ENCODE measurements at regions of chr17 and their contacts with region 1.

Region 1: DNA sequence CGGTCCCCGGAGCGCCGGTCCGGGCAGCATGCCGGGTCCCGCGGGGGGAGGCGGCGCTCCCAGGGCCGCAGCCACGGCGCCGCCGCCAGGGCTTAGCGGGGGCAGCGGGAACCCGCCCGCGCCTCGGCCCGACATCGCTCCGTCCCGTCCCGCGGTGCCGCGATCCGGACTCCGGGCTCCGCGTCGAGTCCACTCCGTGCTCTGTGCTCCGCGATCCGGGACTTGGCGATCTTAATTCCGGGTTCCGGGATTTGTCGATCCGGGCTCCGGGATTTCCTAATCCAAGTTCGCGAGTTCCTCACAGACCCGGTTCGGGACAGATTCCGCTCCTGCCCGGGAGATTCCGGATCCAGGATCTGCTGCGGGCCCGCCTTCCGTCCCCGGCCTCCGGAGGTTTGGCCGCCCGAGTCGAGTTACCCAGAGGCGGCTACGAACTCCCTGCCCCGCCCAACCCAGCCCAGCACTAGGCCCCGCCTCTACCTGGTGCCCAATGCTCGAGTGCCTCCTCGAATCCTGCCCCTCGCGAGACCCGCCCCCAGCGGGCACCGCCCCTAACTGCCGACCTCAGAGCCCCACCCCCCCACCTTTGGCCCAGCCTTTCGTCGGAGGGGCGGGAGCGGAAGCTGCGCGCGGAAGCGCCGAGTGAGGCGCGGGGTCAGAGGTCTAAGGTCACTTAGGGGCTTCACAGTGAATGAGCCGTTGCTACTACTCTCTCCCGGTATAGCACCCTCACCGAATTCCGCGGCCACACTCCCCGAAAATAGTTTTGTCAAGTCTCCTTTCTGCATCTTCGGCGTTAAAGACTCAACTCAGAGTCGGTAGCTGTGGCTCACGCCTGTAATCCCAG is at the start of gene SMARCD2:
- DNase-seq: peak; percentile 99
- ATAC-seq: peak; percentile 67 to 68
- H3K4me3 ChIP-seq: peak within 1 kb of the TSS; percentile 77 to 96 (median 91)
- H3K27ac ChIP-seq: peak within 1 kb of the TSS; percentile 96 to 99 (median 96)
- H3K4me1 ChIP-seq: peaks cover 42 to 45% of the 10 kb centered on the region in 2 donors
- H3K27me3 ChIP-seq: no peaks in the 10 kb centered on the region
- CTCF ChIP-seq: peak in 3 of 5 experiments; percentile 23 to 54 (median 47)
- POLR2A ChIP-seq: peak; percentile 80 to 82
- total RNA-seq, gene SMARCD2: 30.2 to 64.3 (median 44.9) TPM

Region 2: GRCh38 chr17:62065598-62066468 is 1776.9 kb before region 1 on chr17:
- in situ Hi-C with region 1: no loop called
- intact Hi-C with region 1: loop called (anchors 10 kb)
- DNase-seq: peak; percentile 98 to 99
- ATAC-seq: peak; percentile 82 to 86
- H3K4me3 ChIP-seq: peak overlapping the region; percentile 84 to 100 (median 91)
- H3K27ac ChIP-seq: peak overlapping the region; percentile 96 to 100 (median 100)
- H3K4me1 ChIP-seq: peaks cover 24 to 26% of the 10 kb centered on the region in 2 donors
- H3K27me3 ChIP-seq: no peaks in the 10 kb centered on the region
- CTCF ChIP-seq: peak; percentile 85 to 95 (median 92)
- POLR2A ChIP-seq: peak; percentile 89 to 94

Region 3: GRCh38 chr17:63741221-63742049 is 101.3 kb before region 1 on chr17 and contains the start of gene STRADA:
- in situ Hi-C with region 1: no loop called
- intact Hi-C with region 1: loop called (anchors 2 kb)
- DNase-seq: peak; percentile 98 to 99
- ATAC-seq: peak; percentile 94 to 98
- H3K4me3 ChIP-seq: peak within 1 kb of the TSS; percentile 77 to 85 (median 82)
- H3K27ac ChIP-seq: peak within 1 kb of the TSS; percentile 86 to 92 (median 90)
- H3K4me1 ChIP-seq: peaks cover 14% of the 10 kb centered on the region in 2 donors
- H3K27me3 ChIP-seq: no peaks in the 10 kb centered on the region
- CTCF ChIP-seq: no peak
- POLR2A ChIP-seq: peak; percentile 58 to 72
- total RNA-seq, gene STRADA: 7.5 to 15.0 (median 8.6) TPM

Region 4: DNA sequence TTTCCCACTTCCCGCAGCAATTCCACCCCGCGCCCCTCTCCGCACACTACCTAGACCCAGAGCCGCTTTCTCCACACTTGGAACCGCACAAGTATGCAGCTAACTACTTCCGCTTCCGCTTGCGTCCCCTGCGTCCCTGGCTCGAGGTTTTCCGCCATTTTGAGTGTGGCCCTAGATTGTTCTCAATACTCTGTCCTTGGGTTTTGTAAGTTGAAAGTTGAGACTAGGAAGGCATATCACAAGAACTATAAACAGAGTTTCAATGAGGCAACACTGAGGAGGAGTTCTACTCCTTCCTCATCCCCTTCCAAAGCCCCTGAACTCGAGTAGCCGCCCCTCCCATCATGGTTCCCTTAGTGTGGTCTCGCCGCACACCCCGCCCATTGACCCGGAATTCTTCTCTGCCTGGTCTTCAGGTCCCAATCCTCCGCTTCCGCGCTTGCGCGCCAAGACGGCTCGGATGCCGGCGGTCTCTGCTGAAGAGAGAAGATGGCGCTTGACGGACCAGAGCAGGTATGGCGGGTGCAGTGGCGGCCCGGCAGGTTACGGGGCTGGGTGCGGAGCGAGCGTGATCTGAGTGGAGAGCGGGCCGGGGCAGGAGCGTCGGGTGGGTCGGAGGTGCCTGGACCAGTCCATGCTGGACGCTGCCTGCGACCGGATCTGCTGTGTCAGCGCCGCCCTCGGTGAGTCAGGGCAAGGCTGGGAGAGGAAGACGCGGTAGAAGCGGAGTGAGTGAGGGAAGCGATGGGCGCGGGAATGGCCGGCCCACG is 15.6 kb before region 1 on chr17 and contains the starts of genes FTSJ3 and PSMC5:
- in situ Hi-C with region 1: no loop called
- intact Hi-C with region 1: loop called (anchors 1 kb)
- DNase-seq: peak; percentile 94 to 95
- ATAC-seq: peak; percentile 96 to 97
- H3K4me3 ChIP-seq: peak within 1 kb of the TSS; percentile 84 to 89 (median 86)
- H3K27ac ChIP-seq: peak within 1 kb of the TSS; percentile 92 to 95 (median 94)
- H3K4me1 ChIP-seq: peaks cover 25 to 33% of the 10 kb centered on the region in 2 donors
- H3K27me3 ChIP-seq: no peaks in the 10 kb centered on the region
- CTCF ChIP-seq: peak in 3 of 5 experiments; percentile 23 to 53 (median 31)
- POLR2A ChIP-seq: peak; percentile 78 to 91
- total RNA-seq, gene FTSJ3: 24.6 to 46.3 (median 34.9) TPM
- total RNA-seq, gene PSMC5: 103 to 153 (median 123) TPM

Region 5: GRCh38 chr17:64506576-64507477 is 664.1 kb after region 1 on chr17 and contains the start of gene CEP95:
- in situ Hi-C with region 1: loop called in 1 of 4 experiments (anchors 25 kb)
- intact Hi-C with region 1: loop called (anchors 5 kb)
- DNase-seq: peak; percentile 94 to 97
- ATAC-seq: peak; percentile 81 to 83
- H3K4me3 ChIP-seq: peak within 1 kb of the TSS; percentile 89 to 98 (median 96)
- H3K27ac ChIP-seq: peak within 1 kb of the TSS; percentile 97 to 100 (median 99)
- H3K4me1 ChIP-seq: peaks cover 36 to 40% of the 10 kb centered on the region in 2 donors
- H3K27me3 ChIP-seq: no peaks in the 10 kb centered on the region
- CTCF ChIP-seq: no peak
- POLR2A ChIP-seq: peak; percentile 82 to 83
- total RNA-seq, gene CEP95: 6.5 to 18.8 (median 17.7) TPM